ENCODE measurements at regions of chr11 and their contacts with region 1.

Region 1: GRCh38 chr11:72668611-72669347 is 5.4 kb downstream of the PDE2A start:
- DNase-seq: no peak
- H3K4me3 ChIP-seq: no peak overlapping the region
- H3K27ac ChIP-seq: no peak overlapping the region
- H3K4me1 ChIP-seq: peaks cover 0 to 13% (median 7%) of the 10 kb centered on the region in 4 experiments; a peak in 6 of 7 replicates
- H3K27me3 ChIP-seq: peaks cover 0 to 8% (median under 1%) of the 10 kb centered on the region in 4 experiments; a peak in 4 of 7 replicates
- CTCF ChIP-seq: no peak
- EP300 ChIP-seq: no peak
- POLR2A ChIP-seq: no peak
- RAD21 ChIP-seq: no peak

Region 2: DNA sequence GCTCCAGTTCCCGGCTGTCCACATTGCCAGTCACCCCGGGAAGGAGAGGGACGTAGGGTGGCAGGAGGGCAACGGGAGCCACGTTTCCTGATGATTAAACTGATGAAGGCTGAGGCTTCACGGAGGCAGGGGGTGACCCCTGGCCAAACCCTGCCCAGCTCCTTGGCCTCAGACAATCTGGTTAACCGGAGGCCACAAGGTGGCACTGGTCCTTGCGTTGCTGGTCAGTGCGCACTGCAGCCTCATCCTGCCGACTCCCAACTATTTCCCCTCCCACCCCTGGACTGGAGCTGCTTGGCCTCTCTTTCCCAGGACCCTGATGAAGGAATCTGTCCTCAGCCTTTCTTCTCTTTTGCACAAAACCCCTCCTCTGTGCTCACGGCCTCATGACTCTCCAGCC is 69.9 kb before region 1 on chr11:
- CTCF ChIA-PET with region 1: interaction called, 552 read pairs
- POLR2A ChIA-PET with region 1: interaction called, 4 read pairs
- DNase-seq: peak in 1 of 2 experiments; percentile 70
- H3K4me3 ChIP-seq: no peak overlapping the region
- H3K27ac ChIP-seq: no peak overlapping the region
- H3K4me1 ChIP-seq: peaks cover 5 to 26% (median 20%) of the 10 kb centered on the region in 4 experiments
- H3K27me3 ChIP-seq: peaks cover 0 to 14% (median 3%) of the 10 kb centered on the region in 4 experiments; a peak in 4 of 7 replicates
- CTCF ChIP-seq: peak; percentile 82 to 86 (median 83)
- EP300 ChIP-seq: no peak
- POLR2A ChIP-seq: no peak
- RAD21 ChIP-seq: peak; percentile 68 to 78

Region 3: DNA sequence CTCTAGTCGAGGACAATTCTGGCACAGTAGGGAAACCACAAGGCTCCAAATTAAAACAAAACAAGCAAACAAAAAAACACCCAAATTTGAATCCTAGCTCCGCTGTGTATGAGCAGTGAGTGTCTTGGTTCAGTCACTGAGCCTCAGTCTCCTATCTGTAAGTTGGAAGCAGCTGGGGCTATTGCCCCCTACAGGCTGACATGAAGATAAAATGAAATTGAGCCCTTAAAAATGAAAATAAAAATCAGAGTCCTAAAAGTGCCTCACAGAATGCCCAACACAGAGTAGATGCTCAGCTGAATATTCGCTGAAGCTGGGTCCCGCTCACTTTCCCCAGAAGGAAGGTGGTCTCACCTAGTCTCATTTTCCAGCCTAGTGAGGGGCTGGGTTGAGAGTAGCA is 59.7 kb before region 1 on chr11:
- CTCF ChIA-PET with region 1: interaction called, 158 read pairs
- POLR2A ChIA-PET with region 1: no interaction called
- DNase-seq: no peak
- H3K4me3 ChIP-seq: no peak overlapping the region
- H3K27ac ChIP-seq: no peak overlapping the region
- H3K4me1 ChIP-seq: no peaks in the 10 kb centered on the region
- H3K27me3 ChIP-seq: no peaks in the 10 kb centered on the region; a peak in 1 of 7 replicates
- CTCF ChIP-seq: peak in 2 of 3 experiments; percentile 55 to 58; a peak in 3 of 4 replicates
- EP300 ChIP-seq: no peak
- POLR2A ChIP-seq: no peak
- RAD21 ChIP-seq: peak in 1 of 2 experiments; percentile 39; a peak in 1 of 4 replicates

Region 4: DNA sequence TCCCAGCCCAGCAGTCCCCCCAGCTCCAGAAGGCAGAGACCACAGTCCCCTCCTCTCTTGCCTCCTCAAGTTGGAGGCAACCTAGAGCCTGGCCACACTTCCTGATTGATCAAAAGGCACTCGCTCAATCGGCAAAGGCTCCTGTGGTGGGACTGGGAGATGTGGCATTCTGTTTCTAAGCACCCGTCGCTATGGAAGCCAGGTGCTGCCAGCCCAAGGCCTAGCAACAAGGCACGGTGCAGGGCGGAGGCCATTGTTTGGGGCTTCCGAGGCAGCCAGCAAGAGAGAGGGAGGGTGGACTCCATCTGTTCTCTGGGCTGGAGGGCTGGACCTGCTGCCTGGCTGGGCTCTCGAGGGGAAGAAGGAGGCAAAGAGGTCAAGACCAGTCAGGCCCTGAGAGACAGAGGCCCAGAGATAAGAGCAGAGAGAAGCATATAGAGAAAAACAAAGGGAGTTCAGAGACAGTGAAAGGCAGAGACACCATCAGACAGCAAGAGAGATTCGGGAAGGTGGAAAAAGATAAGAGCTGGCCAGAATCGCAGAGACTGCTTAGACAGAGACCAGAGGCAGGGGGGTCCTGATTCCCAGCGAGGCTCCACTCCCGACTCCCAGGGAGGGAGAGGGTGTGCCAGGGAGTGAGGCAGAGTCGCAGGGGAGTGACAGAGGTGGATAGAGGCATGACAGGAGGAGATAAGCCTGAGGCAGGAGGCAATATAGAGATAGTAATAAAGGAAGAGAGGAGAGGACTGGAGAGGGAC is 15.7 kb before region 1 on chr11:
- CTCF ChIA-PET with region 1: interaction called, 36 read pairs
- POLR2A ChIA-PET with region 1: interaction called, 6 read pairs
- DNase-seq: peak; percentile 21 to 77
- H3K4me3 ChIP-seq: no peak overlapping the region
- H3K27ac ChIP-seq: no peak overlapping the region
- H3K4me1 ChIP-seq: peaks cover 0 to 12% (median 7%) of the 10 kb centered on the region in 4 experiments; a peak in 4 of 7 replicates
- H3K27me3 ChIP-seq: no peaks in the 10 kb centered on the region; a peak in 1 of 7 replicates
- CTCF ChIP-seq: no peak
- EP300 ChIP-seq: no peak
- POLR2A ChIP-seq: no peak
- RAD21 ChIP-seq: no peak

Measured in H1 (cell line).